ENCODE measurements at regions of chr1 and their contacts with region 1.

Region 1: GRCh38 chr1:174883409-174883808 is 116.3 kb upstream of the CACYBP start:
- DNase-seq: peak; percentile 65
- ATAC-seq: peak; percentile 92
- H3K4me3 ChIP-seq: no peak overlapping the region
- H3K27ac ChIP-seq: no peak overlapping the region
- H3K4me1 ChIP-seq: no peaks in the 10 kb centered on the region
- H3K27me3 ChIP-seq: no peaks in the 10 kb centered on the region
- CTCF ChIP-seq: peak; percentile 50

Region 2: GRCh38 chr1:174413632-174414031 is 469.8 kb before region 1 on chr1:
- CTCF ChIA-PET with region 1: no interaction called
- POLR2A ChIA-PET with region 1: no interaction called
- intact Hi-C with region 1: no loop called
- DNase-seq: no peak
- ATAC-seq: no peak
- H3K4me3 ChIP-seq: no peak overlapping the region
- H3K27ac ChIP-seq: no peak overlapping the region
- H3K4me1 ChIP-seq: no peaks in the 10 kb centered on the region
- H3K27me3 ChIP-seq: no peaks in the 10 kb centered on the region
- CTCF ChIP-seq: peak; percentile 46

Region 3: DNA sequence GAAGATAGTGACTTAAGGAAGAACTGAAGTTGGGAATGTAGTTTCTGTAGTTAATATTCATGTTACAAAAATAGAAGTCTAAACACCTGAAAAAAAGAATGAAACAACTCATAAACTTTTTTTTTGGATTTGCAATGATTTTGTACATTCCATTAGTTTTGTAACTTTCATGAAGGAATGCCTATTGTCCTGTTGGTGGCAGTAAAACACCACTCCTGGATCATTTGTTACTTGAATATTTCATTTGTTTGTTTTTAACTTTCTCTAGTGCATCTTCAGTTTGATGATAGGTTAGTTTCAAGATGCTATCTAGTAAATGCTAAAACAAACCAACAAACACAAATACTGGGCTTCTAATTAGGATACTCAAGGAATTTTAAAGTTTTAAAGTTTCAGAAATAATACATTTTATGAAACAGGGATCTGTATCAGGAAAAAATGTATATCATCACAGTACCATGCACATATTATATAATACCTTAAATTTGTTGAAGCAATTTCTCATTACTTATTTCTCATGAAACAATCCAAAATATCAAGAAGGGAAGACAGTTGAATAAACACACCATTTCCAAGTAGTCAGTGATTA is 113.4 kb before region 1 on chr1:
- CTCF ChIA-PET with region 1: no interaction called
- POLR2A ChIA-PET with region 1: no interaction called
- intact Hi-C with region 1: loop called (anchors 2 kb)
- DNase-seq: peak; percentile 54
- ATAC-seq: no peak
- H3K4me3 ChIP-seq: no peak overlapping the region
- H3K27ac ChIP-seq: no peak overlapping the region
- H3K4me1 ChIP-seq: no peaks in the 10 kb centered on the region
- H3K27me3 ChIP-seq: no peaks in the 10 kb centered on the region
- CTCF ChIP-seq: peak; percentile 74

Measured in PC-3 (cell line).